ENCODE measurements at regions of chr11 and their contacts with region 1.

Region 1: GRCh38 chr11:104366321-104366734 is 202.4 kb upstream of the PDGFD start:
- DNase-seq: peak in 1 of 3 donors; percentile 17
- ATAC-seq: no peak
- H3K4me3 ChIP-seq: no peak overlapping the region
- H3K27ac ChIP-seq: no peak overlapping the region
- H3K4me1 ChIP-seq: no peaks in the 10 kb centered on the region
- H3K27me3 ChIP-seq: no peaks in the 10 kb centered on the region
- CTCF ChIP-seq: no peak
- POLR2A ChIP-seq: no peak

Region 2: DNA sequence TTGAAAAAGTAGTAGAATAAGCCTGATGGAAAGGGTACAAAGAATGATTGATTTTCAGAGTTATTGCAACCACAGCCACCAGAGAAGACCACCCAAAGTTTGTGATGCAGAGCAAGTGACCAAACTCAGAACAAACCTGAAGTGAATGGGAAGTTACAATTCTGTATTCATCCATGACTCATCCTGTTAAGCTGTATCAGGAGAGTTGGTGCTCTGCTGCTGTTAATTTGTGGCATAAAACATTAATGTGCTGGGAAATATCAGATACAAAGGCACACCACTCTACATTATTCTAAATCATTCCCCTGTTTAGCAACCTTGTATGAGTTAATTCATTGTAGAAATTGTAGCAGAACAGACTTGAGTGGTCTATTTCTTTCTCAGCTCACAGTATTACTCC is 182.7 kb before region 1 on chr11:
- intact Hi-C with region 1: no loop called
- DNase-seq: no peak
- ATAC-seq: no peak
- H3K4me3 ChIP-seq: no peak overlapping the region
- H3K27ac ChIP-seq: no peak overlapping the region
- H3K4me1 ChIP-seq: no peaks in the 10 kb centered on the region
- H3K27me3 ChIP-seq: no peaks in the 10 kb centered on the region
- CTCF ChIP-seq: no peak
- POLR2A ChIP-seq: no peak

Region 3: GRCh38 chr11:104222464-104222863 is 143.9 kb before region 1 on chr11:
- intact Hi-C with region 1: loop called in 1 of 2 experiments (anchors 5 kb)
- DNase-seq: no peak
- ATAC-seq: no peak
- H3K4me3 ChIP-seq: no peak overlapping the region
- H3K27ac ChIP-seq: no peak overlapping the region
- H3K4me1 ChIP-seq: no peaks in the 10 kb centered on the region
- H3K27me3 ChIP-seq: no peaks in the 10 kb centered on the region
- CTCF ChIP-seq: no peak
- POLR2A ChIP-seq: no peak

Region 4: GRCh38 chr11:104422315-104422944 is 56.1 kb after region 1 on chr11:
- intact Hi-C with region 1: no loop called
- DNase-seq: peak in 1 of 3 donors; percentile 40
- ATAC-seq: no peak
- H3K4me3 ChIP-seq: no peak overlapping the region
- H3K27ac ChIP-seq: no peak overlapping the region
- H3K4me1 ChIP-seq: no peaks in the 10 kb centered on the region
- H3K27me3 ChIP-seq: no peaks in the 10 kb centered on the region
- CTCF ChIP-seq: no peak
- POLR2A ChIP-seq: no peak

Measured in right lobe of liver (tissue), 6 donors.